PC-3 (cell line): ENCODE measurements at regions of chr11 and their contacts with region 1.

Region 1: DNA sequence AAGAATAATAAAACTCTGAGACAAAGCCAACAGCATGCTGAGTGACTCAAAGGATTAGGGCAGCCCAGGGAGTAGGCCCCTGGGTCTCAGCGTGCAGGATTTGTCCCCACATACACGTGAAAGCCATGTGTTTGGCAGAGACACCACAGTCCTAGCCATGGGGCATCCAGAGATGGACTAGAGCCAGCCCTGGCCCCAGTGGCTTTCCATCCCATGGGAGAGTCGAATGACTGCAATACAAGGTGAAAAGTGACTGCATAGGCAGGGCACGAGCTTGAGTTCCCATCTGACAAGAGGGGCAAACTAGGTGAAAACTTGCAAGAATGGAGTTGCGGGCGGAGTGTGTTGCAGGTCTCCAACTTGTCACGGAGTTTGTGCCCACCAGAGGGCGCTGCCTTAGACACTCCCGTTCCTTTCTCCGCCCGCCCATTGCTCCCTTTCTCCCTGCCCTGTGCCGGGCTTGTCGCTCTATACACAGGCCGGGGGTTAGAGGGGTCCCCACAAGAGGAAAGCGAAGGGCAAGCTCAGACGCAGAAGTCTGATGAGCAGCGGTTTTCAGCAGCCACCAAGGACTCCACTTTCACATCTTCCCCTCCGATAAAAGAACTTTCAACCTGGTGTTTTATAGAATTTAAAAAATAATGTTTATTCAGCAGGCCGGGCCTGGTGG is 24.2 kb downstream of the TSKU start:
- DNase-seq: peak; percentile 88
- ATAC-seq: peak; percentile 91
- H3K4me3 ChIP-seq: 0 out of 2 replicates have a peak overlapping the region, but pooled peaks have one; percentile 25
- H3K27ac ChIP-seq: no peak overlapping the region
- H3K4me1 ChIP-seq: no peaks in the 10 kb centered on the region
- H3K27me3 ChIP-seq: no peaks in the 10 kb centered on the region
- CTCF ChIP-seq: peak; percentile 92

Region 2: DNA sequence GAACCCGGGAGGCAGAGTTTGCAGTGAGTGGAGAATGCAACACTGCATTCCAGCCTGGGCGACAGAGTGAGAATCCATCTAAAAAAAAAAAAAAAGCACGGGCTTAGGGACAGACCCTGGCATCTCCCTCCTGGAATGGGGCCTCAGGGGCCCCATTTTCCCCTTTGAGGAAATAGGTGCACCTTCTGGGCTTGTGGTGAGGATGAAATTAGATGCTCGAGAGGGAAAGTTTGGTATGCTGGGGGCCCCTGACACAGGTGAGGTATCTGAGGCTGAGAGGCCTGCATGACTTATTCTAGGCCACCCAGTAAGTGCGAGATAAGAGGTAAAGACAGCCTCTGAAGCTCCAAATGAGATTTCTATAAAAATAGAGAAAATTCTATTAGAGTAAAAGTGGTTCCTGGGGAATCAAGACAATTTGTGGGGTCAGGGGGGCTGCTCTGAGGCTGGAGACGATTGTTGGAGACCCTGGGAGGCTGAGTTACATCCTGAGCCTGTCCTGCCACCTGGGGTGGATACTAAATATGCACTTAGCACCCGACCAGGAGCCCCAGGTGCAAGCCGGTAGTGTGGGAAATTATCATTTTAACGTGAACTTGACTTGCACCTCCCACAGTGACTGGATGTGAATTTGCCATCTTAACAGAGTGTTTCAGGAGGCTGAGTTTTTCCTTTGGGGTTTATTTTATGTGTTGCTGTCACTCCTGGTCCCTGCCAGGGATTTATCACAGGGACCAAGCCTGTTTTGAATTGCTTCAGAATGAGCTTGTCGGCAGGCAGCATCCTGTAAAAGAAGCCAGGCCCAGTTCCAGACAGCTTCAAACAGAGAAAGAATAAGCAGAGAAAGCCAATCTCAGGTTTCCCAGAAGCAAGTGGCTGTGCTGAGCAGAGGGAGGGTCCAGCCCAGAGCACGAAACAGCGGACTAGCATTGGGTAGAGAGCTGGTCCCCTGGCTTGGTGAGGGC is 72.6 kb before region 1 on chr11:
- CTCF ChIA-PET with region 1: interaction called, 10 read pairs
- POLR2A ChIA-PET with region 1: no interaction called
- intact Hi-C with region 1: no loop called
- DNase-seq: no peak
- ATAC-seq: no peak
- H3K4me3 ChIP-seq: no peak overlapping the region
- H3K27ac ChIP-seq: no peak overlapping the region
- H3K4me1 ChIP-seq: no peaks in the 10 kb centered on the region
- H3K27me3 ChIP-seq: no peaks in the 10 kb centered on the region
- CTCF ChIP-seq: no peak

Region 3: GRCh38 chr11:76835928-76836612 is 28.7 kb after region 1 on chr11:
- CTCF ChIA-PET with region 1: no interaction called
- POLR2A ChIA-PET with region 1: no interaction called
- intact Hi-C with region 1: loop called (anchors 1 kb)
- DNase-seq: peak; percentile 94
- ATAC-seq: peak; percentile 87
- H3K4me3 ChIP-seq: no peak overlapping the region
- H3K27ac ChIP-seq: peak overlapping the region; percentile 52
- H3K4me1 ChIP-seq: peaks cover 48% of the 10 kb centered on the region
- H3K27me3 ChIP-seq: no peaks in the 10 kb centered on the region
- CTCF ChIP-seq: no peak

Region 4: DNA sequence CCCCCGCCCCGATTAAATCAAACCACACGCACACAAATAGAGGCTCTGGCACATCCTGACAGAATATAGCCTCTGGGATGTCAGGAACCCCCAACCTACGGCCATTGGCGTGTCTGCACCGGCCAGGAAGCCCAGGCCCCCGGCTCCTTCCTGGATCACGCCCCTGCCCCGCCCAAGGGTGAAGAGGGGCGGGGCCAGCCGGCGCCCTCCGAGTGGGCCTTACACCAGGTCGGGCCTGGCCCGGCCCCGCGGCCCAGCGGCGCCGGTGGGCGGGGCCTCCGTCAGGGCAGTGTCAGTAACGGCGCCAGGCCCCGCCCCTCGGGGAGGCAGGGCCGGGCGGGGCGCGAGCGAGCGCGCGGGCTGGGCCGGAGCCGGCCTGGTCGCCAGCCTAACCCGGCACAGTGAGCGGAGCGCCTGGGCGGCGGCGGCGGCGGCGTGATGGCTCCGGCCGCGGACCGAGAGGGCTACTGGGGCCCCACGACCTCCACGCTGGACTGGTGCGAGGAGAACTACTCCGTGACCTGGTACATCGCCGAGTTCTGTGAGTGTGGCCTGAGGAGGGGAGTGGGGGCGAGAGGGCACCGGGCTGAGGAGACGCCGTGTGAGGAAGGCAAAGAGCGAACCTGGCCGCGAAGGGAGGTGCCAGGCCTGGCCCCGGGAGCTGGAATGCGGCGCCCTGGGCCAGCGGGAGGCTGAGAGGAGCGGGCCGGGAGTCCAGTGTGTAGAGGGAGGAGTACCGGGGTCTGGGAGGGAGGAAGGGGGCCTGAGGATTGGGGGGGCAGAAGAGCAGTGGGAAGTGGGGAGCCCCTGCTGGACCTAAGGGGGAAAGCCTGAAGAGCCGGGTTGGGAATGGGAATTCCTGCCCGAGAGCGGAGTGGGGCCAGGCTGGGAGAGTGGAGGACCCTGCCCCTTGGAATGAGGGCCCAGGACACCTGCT is 53.5 kb after region 1 on chr11 and contains the start of gene ACER3:
- CTCF ChIA-PET with region 1: interaction called, 4 read pairs
- POLR2A ChIA-PET with region 1: no interaction called
- intact Hi-C with region 1: loop called (anchors 1 kb)
- DNase-seq: peak; percentile 98
- ATAC-seq: peak; percentile 95
- H3K4me3 ChIP-seq: peak within 1 kb of the TSS; percentile 93
- H3K27ac ChIP-seq: peak within 1 kb of the TSS; percentile 22; the same call in 1 of the 2 replicates
- H3K4me1 ChIP-seq: peaks cover 16% of the 10 kb centered on the region
- H3K27me3 ChIP-seq: no peaks in the 10 kb centered on the region
- CTCF ChIP-seq: peak; percentile 24; the same call in 1 of the 2 replicates
- total RNA-seq, gene ACER3: 17.3 and 18.5 TPM in 2 replicates

Region 5: GRCh38 chr11:77091146-77091940 is 284.0 kb after region 1 on chr11:
- CTCF ChIA-PET with region 1: no interaction called
- POLR2A ChIA-PET with region 1: no interaction called
- intact Hi-C with region 1: no loop called
- DNase-seq: peak; percentile 93
- ATAC-seq: peak; percentile 93
- H3K4me3 ChIP-seq: no peak overlapping the region
- H3K27ac ChIP-seq: no peak overlapping the region
- H3K4me1 ChIP-seq: peaks cover 23% of the 10 kb centered on the region
- H3K27me3 ChIP-seq: no peaks in the 10 kb centered on the region
- CTCF ChIP-seq: peak; percentile 98

Region 6: DNA sequence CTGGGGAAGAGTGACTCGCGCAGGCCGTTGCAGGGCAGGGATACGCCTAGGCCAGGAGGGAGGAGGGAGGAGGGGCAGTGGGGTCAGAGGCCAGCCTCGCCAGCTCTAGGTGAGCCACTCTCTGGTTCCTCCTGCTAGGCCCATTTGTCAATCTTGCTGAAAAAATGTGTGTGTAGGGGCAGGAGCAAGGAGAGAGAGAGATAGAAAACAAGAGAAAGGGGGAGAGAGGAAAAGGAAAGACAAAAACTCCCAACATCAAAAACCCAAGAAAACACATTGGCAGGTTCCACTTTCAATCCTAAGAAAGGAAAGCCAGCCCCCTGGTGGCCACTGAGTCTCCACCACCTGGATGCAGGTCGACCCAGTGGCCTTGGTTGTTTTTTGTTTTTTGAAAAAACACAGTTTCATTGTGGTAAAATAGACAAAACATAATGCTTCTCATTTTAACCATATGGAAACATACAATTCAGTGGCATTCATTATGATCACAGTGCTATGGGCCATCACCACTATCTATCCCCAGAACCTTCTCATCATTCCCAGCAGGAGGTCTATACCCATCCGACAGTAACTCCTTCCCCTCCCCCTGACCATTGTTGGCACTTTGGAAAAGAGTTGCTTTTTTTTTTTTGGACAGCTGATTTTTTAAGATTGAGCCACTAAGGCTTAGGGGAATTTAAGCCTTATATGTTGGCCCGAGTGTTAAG is 306.2 kb after region 1 on chr11:
- CTCF ChIA-PET with region 1: no interaction called
- POLR2A ChIA-PET with region 1: no interaction called
- intact Hi-C with region 1: loop called (anchors 10 kb)
- DNase-seq: peak; percentile 67
- ATAC-seq: peak; percentile 45
- H3K4me3 ChIP-seq: no peak overlapping the region
- H3K27ac ChIP-seq: no peak overlapping the region
- H3K4me1 ChIP-seq: peaks cover 33% of the 10 kb centered on the region
- H3K27me3 ChIP-seq: no peaks in the 10 kb centered on the region
- CTCF ChIP-seq: peak; percentile 88